PC-3 (cell line): ENCODE measurements at regions of chr3 and their contacts with region 1.

Region 1: GRCh38 chr3:11846281-11847034 is at the start of gene TAMM41:
- DNase-seq: peak; percentile 93
- ATAC-seq: peak; percentile 98
- H3K4me3 ChIP-seq: peak within 1 kb of the TSS; percentile 99
- H3K27ac ChIP-seq: peak within 1 kb of the TSS; percentile 60
- H3K4me1 ChIP-seq: peaks cover 13% of the 10 kb centered on the region; the same call in 1 of the 2 replicates
- H3K27me3 ChIP-seq: peaks cover under 1% of the 10 kb centered on the region; the same call in 1 of the 2 replicates
- CTCF ChIP-seq: peak; percentile 82
- total RNA-seq, gene TAMM41: 10.0 and 10.5 TPM in 2 replicates

Region 2: GRCh38 chr3:11705049-11705448 is 141.4 kb before region 1 on chr3:
- CTCF ChIA-PET with region 1: interaction called, 10 read pairs
- POLR2A ChIA-PET with region 1: no interaction called
- intact Hi-C with region 1: no loop called
- DNase-seq: no peak
- ATAC-seq: no peak
- H3K4me3 ChIP-seq: no peak overlapping the region
- H3K27ac ChIP-seq: no peak overlapping the region
- H3K4me1 ChIP-seq: no peaks in the 10 kb centered on the region
- H3K27me3 ChIP-seq: no peaks in the 10 kb centered on the region
- CTCF ChIP-seq: no peak

Region 3: GRCh38 chr3:11764931-11765363 is 81.5 kb before region 1 on chr3:
- CTCF ChIA-PET with region 1: no interaction called
- POLR2A ChIA-PET with region 1: no interaction called
- intact Hi-C with region 1: no loop called
- DNase-seq: peak; percentile 92
- ATAC-seq: peak; percentile 90
- H3K4me3 ChIP-seq: peak overlapping the region; percentile 25; the same call in 1 of the 2 replicates
- H3K27ac ChIP-seq: peak overlapping the region; percentile 63
- H3K4me1 ChIP-seq: peaks cover 20% of the 10 kb centered on the region
- H3K27me3 ChIP-seq: no peaks in the 10 kb centered on the region
- CTCF ChIP-seq: no peak

Region 4: DNA sequence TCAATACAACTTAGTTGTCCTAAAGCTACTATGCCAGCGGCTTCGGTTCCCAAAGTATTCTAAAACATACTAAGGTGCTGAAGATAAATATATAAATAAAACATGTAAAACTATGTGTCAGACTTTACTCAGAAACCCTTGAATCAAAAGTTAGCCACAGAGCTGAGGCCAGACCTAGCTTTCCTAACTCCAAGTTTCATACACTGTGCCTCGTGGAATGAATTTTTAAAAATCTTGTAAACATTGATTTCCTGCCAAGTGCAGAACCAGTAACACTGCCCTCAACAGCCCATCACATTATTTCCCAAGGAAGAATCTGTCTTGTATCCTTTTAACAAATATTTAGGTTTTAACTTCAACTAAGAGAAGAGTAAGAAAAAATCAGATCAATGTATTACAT is 36.2 kb before region 1 on chr3:
- CTCF ChIA-PET with region 1: no interaction called
- POLR2A ChIA-PET with region 1: no interaction called
- intact Hi-C with region 1: no loop called
- DNase-seq: peak; percentile 39
- ATAC-seq: peak; percentile 84
- H3K4me3 ChIP-seq: no peak overlapping the region
- H3K27ac ChIP-seq: no peak overlapping the region
- H3K4me1 ChIP-seq: no peaks in the 10 kb centered on the region
- H3K27me3 ChIP-seq: no peaks in the 10 kb centered on the region
- CTCF ChIP-seq: no peak

Region 5: GRCh38 chr3:12046406-12046805 is 199.9 kb after region 1 on chr3:
- CTCF ChIA-PET with region 1: interaction called, 5 read pairs
- POLR2A ChIA-PET with region 1: no interaction called
- intact Hi-C with region 1: loop called (anchors 2 kb)
- DNase-seq: peak; percentile 44
- ATAC-seq: peak; percentile 31; the same call in 1 of the 2 replicates
- H3K4me3 ChIP-seq: no peak overlapping the region
- H3K27ac ChIP-seq: no peak overlapping the region
- H3K4me1 ChIP-seq: no peaks in the 10 kb centered on the region
- H3K27me3 ChIP-seq: peaks cover 63% of the 10 kb centered on the region
- CTCF ChIP-seq: peak; percentile 68